ENCODE measurements at regions of chr11 and their contacts with region 1.

Region 1: DNA sequence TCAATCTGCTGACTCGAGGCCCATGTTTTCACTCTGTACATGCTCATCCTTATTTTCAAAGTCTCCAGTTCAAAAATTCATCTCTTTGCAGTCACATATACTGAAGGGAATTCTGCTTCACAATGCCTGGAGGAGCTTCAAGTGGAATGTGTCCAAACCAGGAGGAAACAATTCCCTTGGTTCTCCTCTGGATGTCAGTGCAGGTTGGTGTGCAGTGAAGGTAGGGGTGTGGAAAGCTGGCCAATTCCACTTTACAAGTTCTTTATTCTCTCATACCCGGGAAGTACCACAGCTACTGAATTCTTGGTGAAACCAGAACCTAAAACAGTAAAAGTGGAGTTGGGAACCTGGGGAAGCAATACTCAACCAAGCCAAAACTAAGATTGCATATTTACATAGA is 57.3 kb downstream of the BDNF start:
- DNase-seq: no peak
- ATAC-seq: peak; percentile 31

Region 2: GRCh38 chr11:27532652-27533325 is 110.2 kb before region 1 on chr11:
- intact Hi-C with region 1: loop called (anchors 10 kb)
- DNase-seq: no peak
- ATAC-seq: no peak